ENCODE measurements at regions of chr6 and their contacts with region 1.

Region 1: DNA sequence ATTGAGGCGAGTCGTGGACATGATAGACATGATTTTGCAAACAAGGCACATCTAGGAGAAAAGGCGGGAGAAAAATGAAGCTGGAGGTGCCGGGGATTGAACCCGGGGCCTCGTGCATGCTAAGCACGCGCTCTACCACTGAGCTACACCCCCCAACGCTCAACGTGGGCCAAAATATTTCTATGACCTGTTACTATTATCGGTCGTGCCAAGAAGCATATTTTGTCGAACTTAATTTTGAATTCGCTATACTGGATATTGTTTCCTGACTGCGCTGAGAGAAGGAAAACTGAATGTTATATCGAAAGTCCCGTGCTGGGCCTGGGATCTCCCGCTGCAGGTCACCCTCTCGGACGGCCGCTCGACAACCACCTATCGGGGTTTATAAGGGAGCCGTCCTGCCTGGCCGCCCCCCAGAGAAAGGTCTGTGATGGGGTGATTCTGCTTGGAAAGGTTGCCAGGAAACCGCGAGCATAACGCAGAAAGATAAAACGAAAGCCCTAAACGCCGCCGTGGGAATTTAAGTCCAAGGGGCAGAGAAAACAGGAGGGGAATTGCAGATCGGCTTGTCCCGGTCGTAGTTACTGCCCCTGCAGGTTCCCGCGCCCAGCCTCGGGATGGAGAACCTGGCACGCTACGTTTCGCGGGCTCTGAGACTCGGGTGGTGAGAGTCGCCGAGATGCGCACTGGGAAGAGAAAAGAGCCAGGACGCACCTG is 60.0 kb downstream of the TRIM27 start:
- DNase-seq: peak; percentile 96
- H3K4me3 Mint-ChIP-seq: peak overlapping the region; percentile 95
- H3K27ac Mint-ChIP-seq: peak overlapping the region; percentile 83
- H3K4me1 Mint-ChIP-seq: peaks cover 33% of the 10 kb centered on the region
- H3K27me3 Mint-ChIP-seq: peaks cover 18% of the 10 kb centered on the region

Region 2: DNA sequence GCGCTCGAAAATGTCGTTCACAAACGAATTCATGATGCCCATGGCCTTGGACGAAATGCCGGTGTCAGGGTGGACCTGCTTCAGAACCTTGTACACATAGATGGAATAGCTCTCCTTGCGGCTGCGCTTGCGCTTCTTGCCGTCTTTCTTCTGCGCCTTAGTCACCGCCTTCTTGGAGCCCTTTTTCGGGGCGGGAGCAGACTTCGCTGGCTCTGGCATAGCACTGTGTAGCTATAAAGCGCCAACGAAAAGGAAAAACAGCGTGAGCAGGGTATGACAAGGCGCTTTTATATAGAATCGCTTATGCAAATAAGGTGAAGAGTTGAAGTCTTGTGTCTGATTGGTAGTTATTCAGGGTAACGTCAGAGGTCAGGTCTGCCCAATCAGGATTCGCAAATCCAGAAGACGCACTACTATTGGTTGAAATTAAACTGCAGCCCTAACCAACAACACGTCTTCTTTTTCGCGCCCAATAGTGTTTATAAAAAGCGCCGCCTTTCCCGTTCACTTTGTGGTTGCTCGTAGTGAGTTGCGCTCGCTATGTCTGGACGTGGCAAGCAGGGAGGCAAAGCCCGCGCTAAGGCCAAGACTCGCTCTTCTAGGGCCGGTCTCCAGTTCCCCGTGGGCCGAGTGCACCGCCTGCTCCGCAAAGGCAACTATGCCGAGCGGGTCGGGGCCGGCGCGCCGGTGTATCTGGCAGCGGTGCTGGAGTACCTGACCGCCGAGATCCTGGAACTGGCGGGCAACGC is 1731.1 kb before region 1 on chr6:
- intact Hi-C with region 1: loop called (anchors 2 kb)
- DNase-seq: peak; percentile 98
- H3K4me3 Mint-ChIP-seq: no peak overlapping the region
- H3K27ac Mint-ChIP-seq: no peak overlapping the region
- H3K4me1 Mint-ChIP-seq: peaks cover 37% of the 10 kb centered on the region
- H3K27me3 Mint-ChIP-seq: no peaks in the 10 kb centered on the region

Region 3: DNA sequence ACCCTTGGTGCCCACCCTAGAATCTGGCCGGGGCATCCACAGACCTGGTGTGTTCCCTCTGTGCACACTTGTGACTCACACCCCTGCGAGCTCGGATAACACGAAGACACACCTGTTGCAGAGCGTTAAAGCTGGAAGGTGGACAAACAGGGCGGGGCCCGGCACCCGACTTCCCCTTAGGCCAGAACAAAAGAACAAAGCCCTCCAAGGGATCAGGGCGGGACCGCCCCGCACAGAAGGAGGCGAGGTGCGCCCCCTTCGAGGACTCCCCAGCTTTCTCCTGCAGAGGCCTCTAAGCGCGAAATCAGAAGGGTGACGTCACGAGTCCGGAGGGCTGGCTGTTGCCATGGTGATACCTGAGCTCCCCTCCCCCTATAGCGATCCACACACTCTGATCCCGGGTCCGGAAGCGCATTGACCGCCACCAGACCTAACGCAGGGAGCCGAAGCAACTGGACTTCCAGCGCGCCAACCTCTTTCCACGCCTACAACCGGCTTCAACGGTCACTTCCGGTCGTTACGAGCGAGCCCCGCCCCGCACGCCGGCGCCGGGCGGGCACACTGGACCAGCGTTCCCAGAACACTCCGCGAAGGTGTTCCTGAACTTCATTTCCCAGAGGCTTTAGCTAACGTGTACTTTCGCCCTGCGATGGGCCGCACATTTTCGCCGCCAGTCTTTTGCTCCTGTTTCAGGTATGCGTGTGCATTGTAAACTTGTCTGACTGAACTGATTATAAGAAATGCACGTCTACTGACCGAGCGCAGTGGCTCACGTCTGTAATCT is 1391.0 kb before region 1 on chr6 and contains the start of gene ZNF184:
- intact Hi-C with region 1: loop called (anchors 10 kb)
- DNase-seq: peak; percentile 97
- H3K4me3 Mint-ChIP-seq: peak within 1 kb of the TSS; percentile 89
- H3K27ac Mint-ChIP-seq: peak within 1 kb of the TSS; percentile 98
- H3K4me1 Mint-ChIP-seq: peaks cover 41% of the 10 kb centered on the region
- H3K27me3 Mint-ChIP-seq: peaks cover 2% of the 10 kb centered on the region
- total RNA-seq, gene ZNF184: 7.9 and 8.2 TPM in 2 replicates

Region 4: DNA sequence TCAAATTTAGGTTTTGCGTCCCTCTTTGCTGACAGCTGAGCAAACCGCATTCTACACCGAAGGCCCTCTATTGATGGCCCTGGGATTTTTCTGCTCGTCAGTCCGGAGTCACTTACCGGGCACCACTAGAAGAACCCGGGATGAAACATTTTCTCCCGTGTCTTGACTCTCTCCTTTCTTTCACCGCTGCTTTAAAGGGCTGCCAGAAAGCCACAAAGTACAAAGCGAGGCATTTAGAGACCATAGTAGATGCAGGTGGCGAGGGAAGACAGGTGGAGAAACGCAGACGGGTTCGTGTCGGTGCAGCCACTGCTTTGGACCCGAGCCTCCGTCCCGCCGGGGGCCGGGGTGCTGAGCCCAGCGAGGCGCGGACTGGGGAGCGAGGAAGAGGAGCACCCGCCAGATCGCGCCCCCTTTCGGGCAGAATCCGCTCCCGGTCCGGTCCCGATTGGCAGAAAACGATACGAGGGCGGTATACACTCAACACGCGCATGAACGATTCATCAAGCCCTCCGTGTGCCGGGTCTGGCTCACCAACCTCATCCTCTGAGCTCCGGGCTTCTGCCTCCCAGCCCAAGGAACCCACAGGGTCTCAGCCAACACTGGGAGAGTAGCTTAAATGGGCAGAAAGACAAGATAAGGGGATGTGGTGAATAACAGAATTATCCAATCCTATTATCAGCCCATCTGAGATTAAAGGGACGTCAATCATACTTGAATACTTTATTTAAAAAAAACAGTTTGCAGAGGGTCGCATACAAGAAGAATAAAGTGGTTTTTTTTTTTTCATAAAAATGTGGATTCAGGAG is 24.9 kb before region 1 on chr6:
- intact Hi-C with region 1: loop called (anchors 1 kb)
- DNase-seq: peak; percentile 94
- H3K4me3 Mint-ChIP-seq: peak overlapping the region; percentile 98
- H3K27ac Mint-ChIP-seq: peak overlapping the region; percentile 81
- H3K4me1 Mint-ChIP-seq: peaks cover 16% of the 10 kb centered on the region
- H3K27me3 Mint-ChIP-seq: peaks cover 44% of the 10 kb centered on the region

Region 5: GRCh38 chr6:28880894-28881780 is 17.4 kb after region 1 on chr6:
- intact Hi-C with region 1: loop called (anchors 1 kb)
- DNase-seq: peak; percentile 85
- H3K4me3 Mint-ChIP-seq: peak overlapping the region; percentile 61
- H3K27ac Mint-ChIP-seq: peak overlapping the region; percentile 34
- H3K4me1 Mint-ChIP-seq: peaks cover 26% of the 10 kb centered on the region
- H3K27me3 Mint-ChIP-seq: peaks cover 29% of the 10 kb centered on the region

Region 6: GRCh38 chr6:28981833-28982475 is 118.2 kb after region 1 on chr6:
- intact Hi-C with region 1: loop called (anchors 2 kb)
- DNase-seq: peak; percentile 91
- H3K4me3 Mint-ChIP-seq: peak overlapping the region; percentile 92
- H3K27ac Mint-ChIP-seq: peak overlapping the region; percentile 95
- H3K4me1 Mint-ChIP-seq: peaks cover 56% of the 10 kb centered on the region
- H3K27me3 Mint-ChIP-seq: peaks cover 38% of the 10 kb centered on the region

Measured in activated CD4-positive, alpha-beta T cell treated with anti-CD3 and anti-CD28 coated beads, Interleukin-2, amount 10 ng/mL, durations not matched to agents 24 days and 14 days (primary cell).